Naive thymus-derived CD4-positive, alpha-beta T cell (primary cell): ENCODE measurements at regions of chr9 and their contacts with region 1.

Region 1: GRCh38 chr9:96854073-96854876 is at the start of gene ZNF782:
- DNase-seq: peak; percentile 66 to 84 (median 77)
- ATAC-seq: peak; percentile 94
- H3K4me3 ChIP-seq: peak within 1 kb of the TSS; percentile 89
- H3K4me3 Mint-ChIP-seq: peak within 1 kb of the TSS; percentile 90 to 100 (median 100)
- H3K27ac ChIP-seq: peak within 1 kb of the TSS; percentile 83
- H3K27ac Mint-ChIP-seq: peak within 1 kb of the TSS; percentile 89 to 100 (median 97)
- H3K4me1 ChIP-seq: peaks cover 15 to 18% of the 10 kb centered on the region in 2 donors
- H3K4me1 Mint-ChIP-seq: peaks cover 28 to 54% (median 42%) of the 10 kb centered on the region in 7 donors
- H3K27me3 ChIP-seq: no peaks in the 10 kb centered on the region
- H3K27me3 Mint-ChIP-seq: peaks cover 0 to 22% (median 0%) of the 10 kb centered on the region in 5 donors
- total RNA-seq, gene ZNF782: 6.2 to 12.4 (median 8.2) TPM

Region 2: GRCh38 chr9:96654443-96655197 is 199.7 kb before region 1 on chr9:
- CTCF ChIA-PET with region 1: no interaction called
- POLR2A ChIA-PET with region 1: no interaction called
- intact Hi-C with region 1: loop called in 1 of 2 experiments (anchors 1 kb)
- DNase-seq: peak; percentile 65 to 94 (median 86)
- ATAC-seq: peak; percentile 89
- H3K4me3 ChIP-seq: peak overlapping the region; percentile 62
- H3K4me3 Mint-ChIP-seq: peak overlapping the region; percentile 88 to 98 (median 93)
- H3K27ac ChIP-seq: peak overlapping the region; percentile 87
- H3K27ac Mint-ChIP-seq: peak overlapping the region; percentile 88 to 98 (median 97)
- H3K4me1 ChIP-seq: peaks cover 0 to 14% of the 10 kb centered on the region in 2 donors
- H3K4me1 Mint-ChIP-seq: peaks cover 0 to 33% (median 21%) of the 10 kb centered on the region in 7 donors
- H3K27me3 ChIP-seq: no peaks in the 10 kb centered on the region
- H3K27me3 Mint-ChIP-seq: peaks cover 0 to 23% (median 0%) of the 10 kb centered on the region in 5 donors

Region 3: GRCh38 chr9:97038909-97039781 is 184.9 kb after region 1 on chr9 and contains the start of gene CTSV:
- CTCF ChIA-PET with region 1: no interaction called
- POLR2A ChIA-PET with region 1: no interaction called
- intact Hi-C with region 1: loop called in 1 of 2 experiments (anchors 10 kb)
- DNase-seq: peak; percentile 47 to 88 (median 60)
- ATAC-seq: peak; percentile 98
- H3K4me3 ChIP-seq: peak within 1 kb of the TSS; percentile 52
- H3K4me3 Mint-ChIP-seq: peak within 1 kb of the TSS; percentile 54 to 87 (median 79)
- H3K27ac ChIP-seq: no peak within 1 kb of the TSS
- H3K27ac Mint-ChIP-seq: peak within 1 kb of the TSS in 2 of 9 donors; percentile 49 to 84
- H3K4me1 ChIP-seq: no peaks in the 10 kb centered on the region
- H3K4me1 Mint-ChIP-seq: peaks cover 3 to 11% (median 9%) of the 10 kb centered on the region in 7 donors
- H3K27me3 ChIP-seq: no peaks in the 10 kb centered on the region
- H3K27me3 Mint-ChIP-seq: peaks cover 36 to 55% (median 47%) of the 10 kb centered on the region in 5 donors
- total RNA-seq, gene CTSV: 0.21 to 0.24 TPM in 2 of 5 experiments, not detected in the others

Region 4: DNA sequence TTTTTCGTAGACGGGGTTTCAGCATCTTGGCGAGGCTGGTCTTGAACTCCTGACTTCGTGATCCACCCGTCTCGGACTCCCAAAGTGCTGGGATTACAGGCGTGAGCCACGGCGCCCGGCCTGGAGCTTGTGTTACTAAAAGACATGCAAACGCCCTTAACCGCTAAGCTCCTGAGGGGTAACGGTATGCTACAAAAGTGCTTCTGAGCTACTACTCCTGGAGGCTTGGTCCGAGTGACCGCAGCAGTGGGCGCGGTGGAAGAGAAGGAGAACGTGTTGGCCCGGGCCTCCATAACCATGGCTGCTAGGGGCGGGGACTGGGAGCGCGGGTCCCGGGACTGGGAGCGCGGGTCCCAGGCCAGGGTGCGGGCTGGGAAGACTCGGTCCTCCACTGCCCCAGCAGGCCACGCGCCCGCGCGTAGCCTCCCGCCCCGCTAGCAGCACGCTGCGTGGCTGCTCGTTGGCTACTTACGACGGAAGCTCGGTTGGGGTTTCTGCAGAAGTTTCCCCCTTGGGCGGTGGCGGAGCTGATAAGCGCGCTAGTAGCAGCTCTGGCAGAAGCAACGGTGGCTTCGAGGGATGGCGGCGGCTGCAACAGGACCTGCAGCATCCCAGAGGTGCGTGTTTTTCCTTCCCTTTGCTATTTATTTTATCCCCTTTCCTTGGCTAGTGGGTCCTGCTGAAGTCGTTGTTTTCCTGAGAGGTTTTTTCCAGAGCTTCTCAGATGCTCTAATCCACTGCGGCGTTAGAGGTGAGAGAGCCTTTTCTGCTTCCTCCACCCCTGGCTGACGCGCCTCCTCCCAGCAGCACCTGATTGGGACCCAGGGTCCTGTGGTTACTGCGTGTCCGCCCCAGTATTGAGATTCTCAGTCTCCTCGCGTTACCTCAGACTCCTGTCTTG is 383.9 kb after region 1 on chr9:
- CTCF ChIA-PET with region 1: interaction called, 3 read pairs
- POLR2A ChIA-PET with region 1: interaction called, 3 read pairs
- intact Hi-C with region 1: loop called (anchors 1 to 5 kb)
- DNase-seq: peak; percentile 48 to 82 (median 70)
- ATAC-seq: peak; percentile 94
- H3K4me3 ChIP-seq: peak overlapping the region; percentile 71
- H3K4me3 Mint-ChIP-seq: peak overlapping the region; percentile 87 to 98 (median 95)
- H3K27ac ChIP-seq: peak overlapping the region; percentile 63
- H3K27ac Mint-ChIP-seq: peak overlapping the region; percentile 84 to 94 (median 90)
- H3K4me1 ChIP-seq: peaks cover 0 to 5% of the 10 kb centered on the region in 2 donors
- H3K4me1 Mint-ChIP-seq: peaks cover 11 to 38% (median 24%) of the 10 kb centered on the region in 7 donors
- H3K27me3 ChIP-seq: no peaks in the 10 kb centered on the region
- H3K27me3 Mint-ChIP-seq: peaks cover 0 to 5% (median 0%) of the 10 kb centered on the region in 5 donors

Region 5: DNA sequence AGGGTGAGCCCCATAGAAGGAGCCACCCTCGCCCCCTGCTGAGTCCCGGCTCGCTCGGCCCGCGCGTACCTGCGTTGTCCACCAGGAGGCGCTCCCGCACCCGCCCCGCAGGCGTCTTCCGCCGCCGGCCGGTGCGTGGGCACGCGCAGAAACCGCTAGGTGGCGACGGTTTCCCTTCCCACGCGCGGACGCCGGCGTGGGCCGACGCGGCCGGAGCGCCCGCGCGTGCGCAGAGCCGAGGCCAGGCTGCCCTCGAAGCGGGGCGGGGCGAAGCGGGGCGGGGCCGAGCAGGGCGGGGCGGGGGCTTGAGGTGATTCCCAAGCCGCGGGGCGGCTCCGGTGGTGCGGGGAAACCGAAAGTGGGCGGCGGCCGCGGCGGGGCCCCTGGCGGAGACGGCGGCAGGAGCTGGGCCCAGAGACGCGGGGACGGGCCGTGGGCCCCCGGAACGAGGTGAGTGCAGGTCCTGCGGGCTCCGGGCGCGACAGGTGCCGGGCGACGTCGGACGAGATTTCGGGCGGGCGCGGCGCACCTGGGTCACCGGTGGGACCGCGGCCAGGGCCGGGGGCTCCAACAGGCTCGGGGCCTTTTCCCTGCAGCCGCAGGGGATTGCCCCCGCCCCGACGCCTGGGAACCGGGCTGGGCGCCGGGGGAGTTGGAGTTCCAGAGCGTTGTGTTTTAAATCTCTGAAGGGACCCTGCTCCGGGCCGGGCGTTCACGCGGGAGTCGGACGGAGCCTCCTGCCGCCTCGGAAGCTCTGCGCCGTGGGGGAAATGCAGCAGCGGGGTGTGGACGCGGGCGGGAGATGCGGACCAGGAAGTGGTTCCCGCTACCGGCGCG is 557.7 kb after region 1 on chr9 and contains the start of gene TDRD7:
- CTCF ChIA-PET with region 1: interaction called, 3 read pairs
- POLR2A ChIA-PET with region 1: interaction called, 3 read pairs
- intact Hi-C with region 1: loop called in 1 of 2 experiments (anchors 1 kb)
- DNase-seq: peak; percentile 82 to 96 (median 90)
- ATAC-seq: peak; percentile 96
- H3K4me3 ChIP-seq: peak within 1 kb of the TSS; percentile 49
- H3K4me3 Mint-ChIP-seq: peak within 1 kb of the TSS; percentile 73 to 95 (median 86)
- H3K27ac ChIP-seq: peak within 1 kb of the TSS; percentile 85
- H3K27ac Mint-ChIP-seq: peak within 1 kb of the TSS; percentile 61 to 93 (median 86)
- H3K4me1 ChIP-seq: peaks cover 8 to 13% of the 10 kb centered on the region in 2 donors
- H3K4me1 Mint-ChIP-seq: peaks cover 12 to 39% (median 34%) of the 10 kb centered on the region in 7 donors
- H3K27me3 ChIP-seq: no peaks in the 10 kb centered on the region
- H3K27me3 Mint-ChIP-seq: peaks cover 16 to 34% (median 16%) of the 10 kb centered on the region in 5 donors
- total RNA-seq, gene TDRD7: 7.8 to 15.0 (median 10.8) TPM